ENCODE measurements at regions of chr19 and their contacts with region 1.

Region 1: GRCh38 chr19:55301459-55302317 is 17.9 kb downstream of the BRSK1 start:
- DNase-seq: no peak
- H3K4me3 ChIP-seq: peak overlapping the region; percentile 23; the same call in 1 of the 2 replicates
- CTCF ChIP-seq: peak; percentile 77

Region 2: DNA sequence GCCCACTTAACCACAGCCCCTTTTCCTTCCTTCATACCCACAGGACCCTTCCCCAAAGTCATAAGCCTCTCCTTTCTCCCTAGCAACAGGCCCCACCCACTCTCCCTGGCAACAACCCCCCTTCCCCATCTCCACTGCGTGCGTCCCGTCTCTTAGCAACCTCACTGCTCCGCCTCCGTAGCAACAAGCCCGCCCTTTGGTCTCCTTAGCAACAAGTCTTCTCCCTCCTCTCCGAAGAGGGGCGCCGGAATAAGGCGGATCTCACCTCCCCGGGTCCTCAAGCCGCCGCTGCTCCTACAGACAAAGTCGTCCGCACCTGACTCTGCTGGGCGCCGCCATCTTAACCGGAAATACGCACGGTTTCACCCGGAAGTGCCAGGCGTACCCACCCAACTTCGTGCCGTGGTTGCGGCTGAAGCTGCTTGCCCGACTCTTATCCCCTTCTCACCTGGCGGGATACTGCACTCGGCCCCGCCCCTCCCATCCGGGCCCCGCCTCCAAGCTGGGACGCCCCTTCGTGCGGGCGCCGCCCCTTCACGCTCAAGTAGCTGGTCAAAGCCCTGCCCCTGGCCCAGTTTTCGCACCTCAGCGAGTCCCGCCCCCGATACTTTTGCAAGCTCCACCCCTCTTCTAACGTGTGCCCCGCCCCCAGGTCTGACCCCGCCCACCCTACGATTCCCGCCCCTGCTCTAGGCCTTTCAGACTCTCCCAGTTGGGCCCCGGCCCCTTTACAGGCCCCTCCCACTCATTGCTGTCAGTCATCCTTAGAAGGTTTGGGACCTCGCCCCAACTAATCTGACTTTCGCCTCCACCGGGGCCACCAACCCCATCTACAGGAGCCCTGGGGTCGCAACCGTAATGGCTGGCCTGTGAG is 21.7 kb before region 1 on chr19 and contains the start of gene HSPBP1:
- CTCF ChIA-PET with region 1: interaction called, 15 read pairs
- POLR2A ChIA-PET with region 1: no interaction called
- DNase-seq: peak; percentile 52
- H3K4me3 ChIP-seq: peak within 1 kb of the TSS; percentile 93
- CTCF ChIP-seq: no peak

Region 3: DNA sequence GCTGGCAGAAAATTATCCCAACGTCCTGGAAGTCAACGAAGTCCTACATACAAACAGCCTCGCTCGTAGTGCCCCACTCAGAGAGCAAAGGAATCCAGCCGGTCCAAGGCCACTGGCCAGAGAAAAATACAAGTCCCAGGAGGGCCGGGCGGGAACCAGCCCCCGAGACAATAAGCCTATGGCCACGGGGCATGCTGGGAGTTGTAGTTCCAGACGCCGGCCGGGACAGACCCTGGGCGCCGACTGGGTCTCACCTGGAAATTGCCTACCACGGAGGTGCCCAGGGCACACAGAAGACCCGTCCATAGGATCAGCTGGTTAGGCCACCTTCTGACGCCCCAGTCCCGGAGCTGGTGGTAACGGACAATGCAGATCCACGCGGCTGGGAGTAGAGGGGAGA is 18.1 kb after region 1 on chr19:
- CTCF ChIA-PET with region 1: interaction called, 135 read pairs
- POLR2A ChIA-PET with region 1: no interaction called
- DNase-seq: no peak
- H3K4me3 ChIP-seq: peak overlapping the region; percentile 33
- CTCF ChIP-seq: no peak

Region 4: DNA sequence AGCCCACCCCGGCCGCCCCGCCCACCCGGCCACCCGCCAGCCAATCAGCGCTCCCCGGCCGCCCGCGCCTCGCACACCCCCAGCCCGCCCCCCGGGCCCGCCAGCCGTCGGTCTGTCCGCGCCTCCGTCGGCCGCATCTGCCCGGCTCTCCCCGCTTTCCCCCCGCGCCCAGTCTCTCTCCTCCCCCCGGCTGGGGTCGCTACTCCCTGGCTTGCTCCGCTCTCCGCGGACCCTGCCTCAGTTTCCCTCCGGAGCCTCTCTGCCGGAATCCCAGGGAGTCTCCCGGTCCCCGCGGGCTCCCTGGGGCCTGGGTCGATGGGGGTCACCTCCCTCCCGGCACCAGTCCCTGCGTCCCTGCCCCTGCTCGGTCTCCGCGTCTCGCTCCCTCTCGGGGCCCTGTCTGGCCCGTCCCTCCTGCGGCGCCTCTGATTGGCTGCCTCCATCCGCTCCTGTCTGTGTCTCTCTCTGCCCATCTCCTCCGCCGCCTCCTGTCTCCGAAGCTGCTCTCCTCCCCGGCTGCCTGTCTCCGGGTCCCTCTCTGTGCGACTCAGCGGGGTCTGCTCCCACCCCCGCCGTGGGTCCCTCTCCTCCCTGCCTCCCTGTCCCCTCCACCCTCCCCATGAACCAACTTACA is 68.1 kb after region 1 on chr19:
- CTCF ChIA-PET with region 1: interaction called, 14 read pairs
- POLR2A ChIA-PET with region 1: interaction called, 3 read pairs
- DNase-seq: no peak
- H3K4me3 ChIP-seq: peak overlapping the region; percentile 74
- CTCF ChIP-seq: no peak

Region 5: DNA sequence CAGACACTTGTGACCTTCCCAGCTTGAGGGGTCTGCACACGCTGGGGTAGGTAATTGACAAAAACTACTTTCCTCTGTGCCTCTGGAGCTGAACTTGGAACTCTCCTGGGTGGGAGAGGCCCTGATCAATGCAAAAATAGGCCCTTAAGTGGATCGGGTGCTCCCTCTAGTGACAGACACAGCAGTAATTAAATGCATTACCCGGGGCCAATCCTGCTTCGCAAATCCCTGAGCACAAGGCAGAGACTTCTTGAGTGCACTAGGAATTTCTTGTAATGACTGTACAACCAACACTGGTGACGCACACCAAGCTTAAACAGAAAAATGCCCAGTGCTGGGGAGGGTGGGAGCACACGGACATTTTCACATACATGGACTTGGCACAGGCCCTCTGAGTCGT is 116.5 kb after region 1 on chr19:
- CTCF ChIA-PET with region 1: interaction called, 33 read pairs
- POLR2A ChIA-PET with region 1: no interaction called
- DNase-seq: peak; percentile 63
- H3K4me3 ChIP-seq: no peak overlapping the region
- CTCF ChIP-seq: peak; percentile 68